ENCODE measurements at regions of chr17 and their contacts with region 1.

Region 1: DNA sequence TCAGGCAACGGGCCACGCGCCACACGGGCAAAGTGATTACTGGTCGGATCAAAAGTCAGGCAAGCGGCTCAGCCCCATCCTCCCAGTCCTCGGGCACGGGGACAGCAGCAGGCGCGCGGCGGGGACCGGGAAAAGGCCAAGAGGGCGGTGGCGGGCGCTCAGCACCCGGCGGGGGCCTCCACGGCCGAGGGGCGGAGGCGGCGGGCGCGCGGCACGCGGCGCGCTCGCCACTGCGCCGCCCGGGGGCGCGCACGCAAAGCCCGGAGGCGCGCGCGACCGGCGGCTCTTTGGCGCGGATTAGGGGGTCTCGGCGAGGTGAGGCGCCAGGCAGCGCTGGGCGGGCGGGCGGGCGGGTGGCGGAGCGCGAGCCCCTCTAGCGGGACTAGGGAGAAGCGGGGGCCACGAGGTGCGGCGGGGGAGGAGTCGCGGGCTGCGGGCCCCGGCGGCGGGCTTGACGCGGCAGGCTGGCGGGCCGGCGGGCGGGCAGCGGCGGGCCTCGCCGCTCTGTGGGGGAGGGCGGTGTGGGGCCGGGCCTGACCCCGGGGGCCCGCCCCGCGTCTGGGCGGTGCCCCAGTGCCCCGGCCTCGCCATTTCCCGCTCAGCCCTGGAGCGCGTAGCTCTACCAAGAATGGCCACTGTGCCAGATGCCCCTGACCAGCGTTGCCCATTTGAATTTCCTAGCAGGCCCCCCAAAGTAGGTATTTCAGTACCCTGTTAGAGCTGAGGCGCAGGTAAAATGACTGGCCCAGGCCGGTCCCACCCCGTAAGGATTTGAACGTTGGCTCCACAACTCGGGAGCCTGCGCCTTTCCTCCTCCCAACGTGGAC is at the starts of genes ACACA and TADA2A:
- DNase-seq: peak; percentile 52 to 86 (median 65)
- ATAC-seq: peak; percentile 95
- H3K4me3 ChIP-seq: peak within 1 kb of the TSS; percentile 99
- H3K4me3 Mint-ChIP-seq: peak within 1 kb of the TSS; percentile 94 to 98 (median 96)
- H3K27ac ChIP-seq: peak within 1 kb of the TSS; percentile 73
- H3K27ac Mint-ChIP-seq: peak within 1 kb of the TSS; percentile 84 to 98 (median 90)
- H3K4me1 ChIP-seq: peaks cover 5 to 11% of the 10 kb centered on the region in 2 donors
- H3K4me1 Mint-ChIP-seq: peaks cover 15 to 55% (median 46%) of the 10 kb centered on the region in 7 donors
- H3K27me3 ChIP-seq: no peaks in the 10 kb centered on the region
- H3K27me3 Mint-ChIP-seq: no peaks in the 10 kb centered on the region
- total RNA-seq, gene ACACA: 13.1 to 47.0 (median 24.0) TPM
- total RNA-seq, gene TADA2A: 15.2 to 41.3 (median 28.7) TPM

Region 2: GRCh38 chr17:37358830-37359681 is 47.8 kb before region 1 on chr17:
- CTCF ChIA-PET with region 1: no interaction called
- POLR2A ChIA-PET with region 1: no interaction called
- intact Hi-C with region 1: loop called (anchors 1 to 2 kb)
- DNase-seq: peak; percentile 81 to 95 (median 85)
- ATAC-seq: peak; percentile 97
- H3K4me3 ChIP-seq: peak overlapping the region; percentile 80
- H3K4me3 Mint-ChIP-seq: peak overlapping the region; percentile 77 to 96 (median 91)
- H3K27ac ChIP-seq: peak overlapping the region; percentile 67
- H3K27ac Mint-ChIP-seq: peak overlapping the region in 7 of 9 donors; percentile 80 to 92 (median 87)
- H3K4me1 ChIP-seq: peaks cover 6 to 14% of the 10 kb centered on the region in 2 donors
- H3K4me1 Mint-ChIP-seq: peaks cover 11 to 28% (median 23%) of the 10 kb centered on the region in 7 donors
- H3K27me3 ChIP-seq: no peaks in the 10 kb centered on the region
- H3K27me3 Mint-ChIP-seq: no peaks in the 10 kb centered on the region

Region 3: GRCh38 chr17:37373530-37374159 is 33.2 kb before region 1 on chr17:
- CTCF ChIA-PET with region 1: interaction called, 5 read pairs
- POLR2A ChIA-PET with region 1: interaction called, 4 read pairs
- intact Hi-C with region 1: loop called in 1 of 2 experiments (anchors 2 kb)
- DNase-seq: peak in 8 of 9 donors; percentile 41 to 71 (median 63)
- ATAC-seq: peak; percentile 99
- H3K4me3 ChIP-seq: no peak overlapping the region
- H3K4me3 Mint-ChIP-seq: no peak overlapping the region
- H3K27ac ChIP-seq: no peak overlapping the region
- H3K27ac Mint-ChIP-seq: peak overlapping the region in 2 of 9 donors; percentile 2 to 69
- H3K4me1 ChIP-seq: no peaks in the 10 kb centered on the region
- H3K4me1 Mint-ChIP-seq: peaks cover 0 to 8% (median 5%) of the 10 kb centered on the region in 7 donors
- H3K27me3 ChIP-seq: no peaks in the 10 kb centered on the region
- H3K27me3 Mint-ChIP-seq: no peaks in the 10 kb centered on the region

Region 4: DNA sequence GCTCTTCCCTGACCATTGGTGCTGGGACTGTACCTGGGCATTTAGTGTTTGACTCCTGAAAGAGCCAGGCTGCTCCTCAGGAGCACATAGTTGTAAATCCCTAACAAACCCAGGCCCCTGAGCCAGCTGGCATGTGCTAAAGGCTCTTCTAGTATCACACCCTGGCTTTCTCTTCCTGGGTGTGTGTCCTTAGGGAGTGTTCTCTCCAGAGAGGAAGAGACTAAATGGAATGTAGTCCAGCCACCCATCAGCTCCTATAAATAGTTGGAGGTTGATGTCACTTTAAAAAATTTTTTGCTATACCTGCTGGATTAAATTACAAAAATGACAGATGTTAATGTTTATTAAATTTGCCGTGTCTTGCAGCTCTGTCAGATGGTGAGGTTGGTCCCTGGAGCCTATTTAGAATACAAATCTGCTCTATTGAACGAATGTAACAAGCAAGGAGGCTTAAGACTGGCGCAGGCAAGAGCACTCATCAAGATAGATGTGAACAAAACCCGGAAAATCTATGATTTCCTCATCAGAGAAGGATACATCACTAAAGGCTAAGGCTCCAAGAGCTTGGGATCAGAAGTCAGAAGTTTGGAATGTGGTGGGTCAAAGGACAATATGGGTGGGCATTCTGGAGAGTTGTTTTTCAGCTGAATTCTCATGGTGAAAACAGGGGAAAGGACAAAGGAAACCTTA is 69.7 kb after region 1 on chr17:
- CTCF ChIA-PET with region 1: no interaction called
- POLR2A ChIA-PET with region 1: no interaction called
- intact Hi-C with region 1: no loop called
- DNase-seq: no peak
- ATAC-seq: no peak
- H3K4me3 ChIP-seq: no peak overlapping the region
- H3K4me3 Mint-ChIP-seq: no peak overlapping the region
- H3K27ac ChIP-seq: no peak overlapping the region
- H3K27ac Mint-ChIP-seq: peak overlapping the region in 1 of 9 donors; percentile 63
- H3K4me1 ChIP-seq: no peaks in the 10 kb centered on the region
- H3K4me1 Mint-ChIP-seq: no peaks in the 10 kb centered on the region
- H3K27me3 ChIP-seq: no peaks in the 10 kb centered on the region
- H3K27me3 Mint-ChIP-seq: no peaks in the 10 kb centered on the region

Region 5: GRCh38 chr17:37489197-37490001 is 82.6 kb after region 1 on chr17 and contains the start of gene DUSP14:
- CTCF ChIA-PET with region 1: no interaction called
- POLR2A ChIA-PET with region 1: no interaction called
- intact Hi-C with region 1: loop called (anchors 1 kb)
- DNase-seq: peak; percentile 72 to 86 (median 84)
- ATAC-seq: peak; percentile 88
- H3K4me3 ChIP-seq: peak within 1 kb of the TSS; percentile 67
- H3K4me3 Mint-ChIP-seq: peak within 1 kb of the TSS; percentile 91 to 98 (median 95)
- H3K27ac ChIP-seq: peak within 1 kb of the TSS; percentile 79
- H3K27ac Mint-ChIP-seq: peak within 1 kb of the TSS; percentile 81 to 95 (median 88)
- H3K4me1 ChIP-seq: peaks cover 19 to 20% of the 10 kb centered on the region in 2 donors
- H3K4me1 Mint-ChIP-seq: peaks cover 20 to 39% (median 27%) of the 10 kb centered on the region in 7 donors
- H3K27me3 ChIP-seq: no peaks in the 10 kb centered on the region
- H3K27me3 Mint-ChIP-seq: peaks cover 0 to 3% (median 0%) of the 10 kb centered on the region in 5 donors
- total RNA-seq, gene DUSP14: 4.3 to 11.7 (median 8.7) TPM

Region 6: DNA sequence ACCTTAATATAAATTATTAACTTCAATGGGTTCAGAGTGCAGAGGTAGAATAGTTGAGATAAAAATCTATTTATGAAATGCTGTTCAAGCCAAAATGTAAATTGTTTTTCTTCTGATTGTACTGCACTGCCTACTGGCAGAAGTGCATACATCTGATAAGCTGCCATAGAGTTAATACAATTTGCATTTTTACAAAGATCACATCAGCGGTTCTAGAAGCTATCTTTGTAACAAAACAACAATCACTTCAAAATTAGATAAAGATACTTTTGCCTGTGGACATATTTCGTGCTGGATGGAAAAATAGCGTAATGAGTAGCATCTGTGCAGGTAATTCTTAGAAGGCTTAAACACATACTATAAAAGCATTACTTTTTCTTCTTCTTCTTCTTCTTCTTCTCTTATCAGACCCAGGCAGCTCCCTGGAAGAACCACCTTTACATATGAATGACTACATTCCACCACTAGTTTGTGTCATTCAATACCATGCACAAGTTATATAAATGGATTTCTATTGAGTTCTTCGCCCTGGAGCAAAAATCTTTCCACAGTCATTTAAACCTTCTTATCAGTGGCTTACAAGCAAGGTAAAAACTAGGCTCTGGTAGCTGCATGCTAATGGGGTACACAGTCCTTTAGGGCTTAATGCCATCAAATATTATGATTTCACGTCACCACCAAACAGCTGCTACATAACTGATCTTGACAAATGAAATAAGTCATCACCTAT is 155.3 kb after region 1 on chr17:
- CTCF ChIA-PET with region 1: no interaction called
- POLR2A ChIA-PET with region 1: no interaction called
- intact Hi-C with region 1: no loop called
- DNase-seq: no peak
- ATAC-seq: no peak
- H3K4me3 ChIP-seq: no peak overlapping the region
- H3K4me3 Mint-ChIP-seq: no peak overlapping the region
- H3K27ac ChIP-seq: no peak overlapping the region
- H3K27ac Mint-ChIP-seq: peak overlapping the region in 3 of 9 donors; percentile 0 to 25 (median 3)
- H3K4me1 ChIP-seq: no peaks in the 10 kb centered on the region
- H3K4me1 Mint-ChIP-seq: peaks cover 0 to 27% (median 12%) of the 10 kb centered on the region in 7 donors
- H3K27me3 ChIP-seq: no peaks in the 10 kb centered on the region
- H3K27me3 Mint-ChIP-seq: no peaks in the 10 kb centered on the region

Region 7: DNA sequence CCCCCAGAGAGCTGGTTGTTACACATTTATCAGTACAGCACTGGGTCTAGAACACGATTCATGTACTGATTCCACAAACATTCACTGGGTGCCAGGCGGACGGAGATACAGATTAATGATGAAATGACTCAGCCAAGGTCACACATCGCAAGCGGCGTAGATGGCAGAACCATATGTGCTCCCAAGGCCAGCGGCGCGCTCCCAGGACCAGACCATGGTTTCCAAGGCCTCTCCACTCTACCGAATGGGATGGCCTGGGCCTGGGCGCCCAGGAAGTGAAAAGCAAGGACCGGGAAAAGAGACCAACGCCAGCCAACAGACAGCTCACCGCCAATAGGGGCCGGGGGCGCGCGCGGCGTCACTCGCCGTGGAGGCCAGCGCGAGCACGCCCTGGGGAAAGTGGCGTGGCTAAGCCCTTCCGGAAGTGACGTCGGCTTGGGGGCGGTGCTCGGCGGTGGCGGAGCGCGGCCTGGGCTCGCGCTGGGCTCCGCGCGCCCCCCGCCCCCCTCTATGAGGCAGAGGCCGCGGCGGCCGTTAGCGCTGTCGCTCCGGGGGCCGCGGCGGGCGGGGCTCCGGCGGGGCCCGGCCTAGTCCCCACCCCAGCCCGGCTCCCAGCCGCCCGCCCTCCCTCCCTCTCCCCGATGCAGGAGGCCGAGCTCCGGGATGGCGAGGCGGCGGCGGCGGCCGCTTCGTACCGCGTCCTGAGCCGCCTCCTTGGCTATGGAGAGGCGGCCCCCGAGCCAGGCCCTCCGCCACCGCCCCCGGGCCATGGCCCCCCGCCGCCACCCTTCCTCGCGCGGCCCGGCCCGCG is 944.8 kb after region 1 on chr17 and contains the start of gene SOCS7:
- CTCF ChIA-PET with region 1: no interaction called
- POLR2A ChIA-PET with region 1: no interaction called
- intact Hi-C with region 1: loop called in 1 of 2 experiments (anchors 2 kb)
- DNase-seq: peak; percentile 81 to 96 (median 90)
- ATAC-seq: peak; percentile 95
- H3K4me3 ChIP-seq: peak within 1 kb of the TSS; percentile 69
- H3K4me3 Mint-ChIP-seq: peak within 1 kb of the TSS; percentile 90 to 96 (median 92)
- H3K27ac ChIP-seq: peak within 1 kb of the TSS; percentile 75
- H3K27ac Mint-ChIP-seq: peak within 1 kb of the TSS; percentile 88 to 98 (median 94)
- H3K4me1 ChIP-seq: peaks cover 9 to 21% of the 10 kb centered on the region in 2 donors
- H3K4me1 Mint-ChIP-seq: peaks cover 31 to 55% (median 45%) of the 10 kb centered on the region in 7 donors
- H3K27me3 ChIP-seq: no peaks in the 10 kb centered on the region
- H3K27me3 Mint-ChIP-seq: no peaks in the 10 kb centered on the region
- total RNA-seq, gene SOCS7: 17.0 to 23.3 (median 21.5) TPM

Measured in naive thymus-derived CD4-positive, alpha-beta T cell (primary cell).